Prostate gland (tissue), 2 donors: ENCODE measurements at regions of chr3 and their contacts with region 1.

Region 1: GRCh38 chr3:57998366-57999283 is 9.6 kb upstream of the FLNB start:
- DNase-seq: peak; percentile 77
- H3K4me3 ChIP-seq: no peak overlapping the region
- H3K27ac ChIP-seq: peak overlapping the region; percentile 53 to 81
- H3K4me1 ChIP-seq: no peaks in the 10 kb centered on the region
- H3K27me3 ChIP-seq: no peaks in the 10 kb centered on the region
- CTCF ChIP-seq: no peak
- POLR2A ChIP-seq: no peak

Region 2: GRCh38 chr3:57864853-57865252 is 133.8 kb before region 1 on chr3:
- intact Hi-C with region 1: loop called (anchors 5 kb)
- DNase-seq: no peak
- H3K4me3 ChIP-seq: no peak overlapping the region
- H3K27ac ChIP-seq: no peak overlapping the region
- H3K4me1 ChIP-seq: no peaks in the 10 kb centered on the region
- H3K27me3 ChIP-seq: no peaks in the 10 kb centered on the region
- CTCF ChIP-seq: peak; percentile 28 to 75 (median 56)
- POLR2A ChIP-seq: no peak

Region 3: GRCh38 chr3:57961828-57962447 is 36.7 kb before region 1 on chr3:
- intact Hi-C with region 1: loop called (anchors 5 kb)
- DNase-seq: no peak
- H3K4me3 ChIP-seq: no peak overlapping the region
- H3K27ac ChIP-seq: no peak overlapping the region
- H3K4me1 ChIP-seq: no peaks in the 10 kb centered on the region
- H3K27me3 ChIP-seq: no peaks in the 10 kb centered on the region
- CTCF ChIP-seq: peak in 3 of 4 experiments; percentile 11 to 51 (median 28)
- POLR2A ChIP-seq: no peak